Right ventricle myocardium superior (tissue), 1 donor: ENCODE measurements at regions of chr12 and their contacts with region 1.

Region 1: DNA sequence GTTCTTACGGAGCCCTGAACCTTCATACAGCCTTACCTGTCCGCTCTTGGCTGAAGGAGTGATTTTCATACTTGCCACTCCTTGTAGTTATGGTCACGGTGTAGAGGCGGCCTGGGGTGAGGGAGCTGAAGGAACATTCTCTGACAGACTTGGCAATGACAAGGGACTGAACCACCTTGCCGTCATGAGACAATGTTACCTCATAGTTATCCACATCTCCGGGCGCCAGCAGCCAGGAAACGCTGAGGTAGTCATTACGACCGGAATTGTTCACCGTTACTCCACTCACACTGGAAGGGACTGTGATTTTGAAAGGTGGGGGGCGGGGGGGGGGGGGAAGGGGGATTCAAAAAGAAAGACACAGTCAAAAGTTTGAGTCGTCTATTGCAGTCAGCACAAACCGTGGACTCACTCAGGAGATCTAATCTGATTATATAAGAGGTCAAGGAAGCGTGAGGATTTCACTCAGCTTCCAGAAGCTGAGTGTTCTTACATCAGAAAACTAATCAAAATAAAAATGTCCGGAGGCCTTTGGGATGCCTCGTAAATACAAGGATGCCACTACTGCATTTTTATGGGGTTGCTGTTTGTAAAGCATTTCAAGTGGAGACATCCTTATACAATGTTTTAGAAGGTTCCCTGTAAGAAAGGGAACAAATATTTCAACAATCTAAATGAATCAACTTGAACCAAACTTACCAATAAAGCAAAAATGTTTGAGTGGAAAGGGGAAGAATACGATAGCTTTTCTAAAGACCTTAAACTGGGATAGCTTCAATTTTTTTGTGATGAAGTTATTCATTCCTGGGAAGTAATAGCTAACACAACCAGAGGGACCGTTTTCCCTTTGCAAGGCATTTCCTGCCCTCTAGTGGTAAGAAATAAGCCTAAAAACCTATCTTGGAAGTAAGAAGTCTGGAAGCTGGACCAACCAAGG is 60.6 kb downstream of the PTPRB start:
- DNase-seq: no peak
- ATAC-seq: peak; percentile 87

Region 2: GRCh38 chr12:69879041-69879960 is 697.3 kb before region 1 on chr12:
- intact Hi-C with region 1: loop called (anchors 5 kb)
- DNase-seq: peak; percentile 59
- ATAC-seq: peak; percentile 97

Region 3: DNA sequence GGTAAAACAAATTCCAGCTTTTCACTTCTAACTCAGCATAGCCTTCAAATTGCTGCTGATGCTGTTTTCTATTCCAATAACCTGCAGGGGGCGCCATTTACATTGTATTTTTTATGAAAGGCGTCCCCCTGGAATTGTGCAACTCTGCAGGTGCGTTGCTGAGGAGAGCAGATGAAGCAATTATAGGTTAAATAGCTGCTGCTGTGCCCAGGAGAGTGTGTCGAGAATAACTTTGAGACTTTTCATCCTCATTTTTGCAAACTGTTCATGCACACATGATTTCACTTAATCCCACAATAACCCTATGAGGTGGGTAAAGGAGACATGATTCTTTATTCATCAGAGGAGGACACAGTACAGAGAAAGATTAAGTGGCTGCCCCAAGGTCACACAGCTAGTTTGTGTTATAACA is 675.9 kb before region 1 on chr12:
- intact Hi-C with region 1: loop called (anchors 5 kb)
- DNase-seq: peak; percentile 49
- ATAC-seq: peak; percentile 67

Region 4: GRCh38 chr12:70774055-70774454 is 197.4 kb after region 1 on chr12:
- intact Hi-C with region 1: no loop called
- DNase-seq: no peak
- ATAC-seq: no peak